CD8-positive, alpha-beta memory T cell (primary cell): ENCODE measurements at regions of chr1 and their contacts with region 1.

Region 1: GRCh38 chr1:156728597-156729462 is at the start of gene ISG20L2:
- DNase-seq: peak; percentile 94 to 98 (median 96)
- H3K4me3 ChIP-seq: peak within 1 kb of the TSS; percentile 97
- H3K4me3 Mint-ChIP-seq: peak within 1 kb of the TSS in 1 of 7 donors; percentile 55
- H3K27ac ChIP-seq: peak within 1 kb of the TSS; percentile 98
- H3K27ac Mint-ChIP-seq: peak within 1 kb of the TSS in 4 of 8 donors; percentile 99 to 100 (median 99)
- H3K4me1 ChIP-seq: peaks cover 37% of the 10 kb centered on the region
- H3K4me1 Mint-ChIP-seq: peaks cover 24 to 27% (median 24%) of the 10 kb centered on the region in 3 donors
- H3K27me3 ChIP-seq: no peaks in the 10 kb centered on the region
- H3K27me3 Mint-ChIP-seq: peaks cover 0 to 2% of the 10 kb centered on the region in 2 donors
- total RNA-seq, gene ISG20L2: 69.4 to 75.9 TPM

Region 2: GRCh38 chr1:156697481-156697880 is 31.3 kb before region 1 on chr1:
- CTCF ChIA-PET with region 1: interaction called, 183 read pairs
- POLR2A ChIA-PET with region 1: no interaction called
- DNase-seq: no peak
- H3K4me3 ChIP-seq: no peak overlapping the region
- H3K4me3 Mint-ChIP-seq: no peak overlapping the region
- H3K27ac ChIP-seq: no peak overlapping the region
- H3K27ac Mint-ChIP-seq: peak overlapping the region in 1 of 8 donors; percentile 38
- H3K4me1 ChIP-seq: no peaks in the 10 kb centered on the region
- H3K4me1 Mint-ChIP-seq: peaks cover 4 to 12% (median 9%) of the 10 kb centered on the region in 3 donors
- H3K27me3 ChIP-seq: peaks cover 9% of the 10 kb centered on the region
- H3K27me3 Mint-ChIP-seq: peaks cover 32 to 63% of the 10 kb centered on the region in 2 donors

Region 3: DNA sequence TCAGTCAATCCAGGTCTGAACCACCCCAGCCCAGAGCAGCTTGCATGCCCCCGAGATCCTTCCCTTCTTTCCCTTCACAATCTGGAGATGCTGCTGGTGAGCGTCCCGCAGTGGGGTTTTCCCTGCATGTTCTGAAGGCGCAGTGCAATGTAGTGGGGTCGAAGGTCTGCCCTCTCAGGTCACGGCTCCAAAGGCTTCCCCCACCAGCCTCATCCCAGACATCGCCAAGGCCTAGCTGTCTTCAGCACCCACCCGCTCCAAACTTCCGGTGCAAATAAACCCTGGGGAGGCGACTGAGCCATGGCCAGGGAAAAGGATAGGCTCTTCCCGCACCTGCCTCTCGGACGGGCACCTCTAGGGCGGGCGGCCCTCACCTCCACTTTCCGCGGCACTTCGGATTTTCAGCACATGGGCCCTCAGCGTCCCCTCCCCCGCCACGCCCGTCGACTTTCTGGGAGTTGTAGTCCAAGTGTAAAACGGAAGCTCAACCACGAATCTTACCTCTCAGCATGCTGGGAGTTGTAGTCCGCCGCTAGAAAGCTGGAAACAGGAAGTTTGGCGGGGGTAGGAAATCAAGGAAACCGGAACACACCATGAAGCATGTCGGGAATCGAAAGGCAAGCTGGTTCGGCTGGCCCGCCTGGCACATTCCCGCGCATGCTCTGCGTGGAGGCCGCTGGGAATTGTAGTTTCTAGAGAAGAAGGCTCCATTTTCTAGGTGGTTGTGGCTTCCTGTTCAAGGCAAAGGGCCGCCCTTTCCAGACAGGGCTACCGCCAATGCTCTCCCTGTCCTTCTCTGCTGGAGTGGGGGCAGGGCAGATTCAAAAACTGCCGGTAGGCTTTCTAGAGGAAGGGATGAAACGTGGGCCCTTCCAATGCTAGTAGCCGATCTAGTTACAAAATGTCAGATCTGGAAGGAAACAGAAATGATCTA is 12.1 kb after region 1 on chr1 and contains the start of gene MRPL24:
- CTCF ChIA-PET with region 1: interaction called, 58 read pairs
- POLR2A ChIA-PET with region 1: interaction called, 45 read pairs
- DNase-seq: peak; percentile 90 to 99 (median 97)
- H3K4me3 ChIP-seq: peak within 1 kb of the TSS; percentile 76
- H3K4me3 Mint-ChIP-seq: peak within 1 kb of the TSS; percentile 93 to 97 (median 94)
- H3K27ac ChIP-seq: peak within 1 kb of the TSS; percentile 62
- H3K27ac Mint-ChIP-seq: peak within 1 kb of the TSS; percentile 92 to 99 (median 98)
- H3K4me1 ChIP-seq: peaks cover 30% of the 10 kb centered on the region
- H3K4me1 Mint-ChIP-seq: peaks cover 27 to 41% (median 41%) of the 10 kb centered on the region in 3 donors
- H3K27me3 ChIP-seq: no peaks in the 10 kb centered on the region
- H3K27me3 Mint-ChIP-seq: no peaks in the 10 kb centered on the region
- total RNA-seq, gene MRPL24: 122 to 131 TPM

Region 4: DNA sequence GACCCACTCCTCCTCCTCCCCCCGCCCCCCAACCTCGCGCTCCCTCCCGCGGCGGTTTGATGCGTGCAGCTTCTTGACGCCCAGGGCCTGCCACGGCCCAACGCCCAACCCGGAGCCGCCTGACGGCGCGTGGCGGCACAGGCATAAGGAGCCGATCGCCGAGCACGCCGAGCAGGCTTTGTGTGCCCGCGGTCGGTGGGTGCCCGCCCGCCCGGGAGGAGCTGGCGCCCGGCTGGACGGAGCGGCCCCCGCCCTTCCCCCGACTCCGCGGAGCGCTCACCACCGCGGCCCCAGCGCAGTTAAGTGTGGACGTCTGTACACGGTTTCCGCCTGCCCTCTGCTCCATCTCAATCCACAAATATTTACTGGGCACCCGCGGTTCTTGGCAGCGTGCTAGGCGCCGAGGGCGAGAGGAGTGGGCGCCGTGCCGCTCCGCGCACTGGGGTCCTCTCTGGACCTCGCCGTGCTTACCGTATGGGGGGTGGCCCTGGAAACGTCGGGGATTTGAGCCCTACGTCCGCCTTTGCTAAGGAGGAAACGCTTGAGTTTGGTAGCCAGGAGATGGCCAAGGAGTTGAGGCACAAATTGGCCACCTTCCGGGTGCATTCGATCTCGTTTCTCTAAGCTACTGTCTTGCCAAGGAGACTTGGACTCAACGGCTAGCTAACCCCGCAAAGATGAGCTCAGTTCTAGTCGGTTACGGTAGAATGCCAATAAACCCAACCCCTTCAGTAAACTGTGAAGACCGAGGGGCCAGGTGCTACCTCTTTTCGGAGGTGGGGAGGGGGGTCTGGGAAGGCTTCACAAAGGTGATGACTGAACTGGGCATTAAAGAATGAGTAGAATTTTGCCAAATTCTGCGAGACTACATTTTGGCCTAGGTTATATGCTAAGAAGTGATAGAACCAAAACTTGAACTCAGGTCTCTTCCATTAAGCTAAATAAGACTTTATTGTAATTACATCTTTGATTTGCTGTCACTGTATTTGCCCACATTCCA is 23.2 kb after region 1 on chr1:
- CTCF ChIA-PET with region 1: interaction called, 16 read pairs
- POLR2A ChIA-PET with region 1: interaction called, 28 read pairs
- DNase-seq: peak; percentile 91 to 97 (median 96)
- H3K4me3 ChIP-seq: peak overlapping the region; percentile 92
- H3K4me3 Mint-ChIP-seq: peak overlapping the region; percentile 86 to 97 (median 92)
- H3K27ac ChIP-seq: peak overlapping the region; percentile 85
- H3K27ac Mint-ChIP-seq: peak overlapping the region; percentile 87 to 97 (median 93)
- H3K4me1 ChIP-seq: peaks cover 42% of the 10 kb centered on the region
- H3K4me1 Mint-ChIP-seq: peaks cover 45 to 62% (median 55%) of the 10 kb centered on the region in 3 donors
- H3K27me3 ChIP-seq: no peaks in the 10 kb centered on the region
- H3K27me3 Mint-ChIP-seq: no peaks in the 10 kb centered on the region

Region 5: DNA sequence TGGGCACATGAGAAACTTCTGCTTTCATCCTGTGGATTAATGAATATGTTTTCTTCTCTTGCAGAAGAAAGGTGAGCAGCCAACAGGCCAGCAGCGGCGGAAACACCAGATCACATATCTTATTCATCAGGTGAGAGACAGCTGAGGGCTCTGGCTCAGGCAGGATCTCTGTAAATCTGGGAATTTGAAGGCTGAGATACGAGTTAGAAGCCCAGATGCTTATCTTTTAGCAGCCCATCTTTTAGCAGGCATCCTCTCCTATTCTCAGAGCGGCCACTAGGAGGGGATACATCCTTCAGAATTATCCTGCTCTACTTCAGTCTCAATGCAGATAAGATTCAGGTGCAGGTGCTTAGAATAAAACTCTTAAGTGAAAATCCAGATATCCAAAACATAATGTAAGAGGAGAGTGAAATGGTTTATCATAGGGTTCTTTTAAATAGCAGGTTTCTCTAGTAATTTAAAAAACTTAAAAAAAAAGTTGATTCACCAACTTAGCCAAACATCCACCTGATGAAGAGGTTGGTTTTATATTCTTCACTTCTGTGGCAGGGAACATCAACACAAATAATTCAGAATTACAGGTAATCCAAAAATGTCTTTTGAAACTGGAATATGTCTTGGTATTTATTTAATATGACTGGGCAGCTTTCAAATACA is 68.5 kb after region 1 on chr1:
- CTCF ChIA-PET with region 1: interaction called, 10 read pairs
- POLR2A ChIA-PET with region 1: no interaction called
- DNase-seq: peak; percentile 35 to 70 (median 56)
- H3K4me3 ChIP-seq: no peak overlapping the region
- H3K4me3 Mint-ChIP-seq: no peak overlapping the region
- H3K27ac ChIP-seq: no peak overlapping the region
- H3K27ac Mint-ChIP-seq: peak overlapping the region in 5 of 8 donors; percentile 21 to 72 (median 52)
- H3K4me1 ChIP-seq: no peaks in the 10 kb centered on the region
- H3K4me1 Mint-ChIP-seq: peaks cover 17 to 28% (median 18%) of the 10 kb centered on the region in 3 donors
- H3K27me3 ChIP-seq: no peaks in the 10 kb centered on the region
- H3K27me3 Mint-ChIP-seq: peaks cover 0 to 5% of the 10 kb centered on the region in 2 donors

Region 6: GRCh38 chr1:156892190-156893047 is 163.6 kb after region 1 on chr1:
- CTCF ChIA-PET with region 1: interaction called, 16 read pairs
- POLR2A ChIA-PET with region 1: no interaction called
- DNase-seq: peak; percentile 76 to 86 (median 77)
- H3K4me3 ChIP-seq: peak overlapping the region; percentile 20
- H3K4me3 Mint-ChIP-seq: peak overlapping the region; percentile 70 to 83 (median 75)
- H3K27ac ChIP-seq: no peak overlapping the region
- H3K27ac Mint-ChIP-seq: peak overlapping the region in 1 of 8 donors; percentile 72
- H3K4me1 ChIP-seq: peaks cover 16% of the 10 kb centered on the region
- H3K4me1 Mint-ChIP-seq: peaks cover 15 to 20% (median 16%) of the 10 kb centered on the region in 3 donors
- H3K27me3 ChIP-seq: peaks cover 3% of the 10 kb centered on the region
- H3K27me3 Mint-ChIP-seq: peaks cover 46 to 69% of the 10 kb centered on the region in 2 donors